ENCODE measurements at regions of chr14 and their contacts with region 1.

Region 1: GRCh38 chr14:64232095-64232838 is 61.9 kb downstream of the ESR2 start:
- DNase-seq: no peak
- H3K4me3 Mint-ChIP-seq: no peak overlapping the region
- H3K27ac Mint-ChIP-seq: peak overlapping the region; percentile 67
- H3K4me1 Mint-ChIP-seq: peaks cover 12% of the 10 kb centered on the region
- H3K27me3 Mint-ChIP-seq: peaks cover 2% of the 10 kb centered on the region

Region 2: DNA sequence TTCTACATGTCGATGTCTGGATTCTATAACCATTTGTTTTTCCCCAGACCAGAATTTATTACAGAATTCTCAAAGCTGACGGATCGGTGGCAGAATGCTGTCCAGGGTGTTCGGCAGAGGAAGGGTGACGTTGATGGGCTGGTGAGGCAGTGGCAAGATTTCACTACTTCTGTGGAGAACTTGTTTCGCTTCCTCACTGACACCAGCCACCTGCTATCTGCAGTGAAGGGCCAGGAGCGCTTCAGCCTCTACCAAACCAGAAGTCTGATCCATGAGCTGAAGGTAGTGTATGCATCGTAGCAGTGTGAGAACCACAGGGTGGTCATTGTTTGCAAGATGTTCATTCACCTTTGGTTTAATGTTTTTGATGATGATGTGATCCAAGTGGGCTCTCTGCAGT is 62.1 kb before region 1 on chr14:
- intact Hi-C with region 1: loop called (anchors 2 kb)
- DNase-seq: no peak
- H3K4me3 Mint-ChIP-seq: no peak overlapping the region
- H3K27ac Mint-ChIP-seq: no peak overlapping the region
- H3K4me1 Mint-ChIP-seq: peaks cover 4% of the 10 kb centered on the region
- H3K27me3 Mint-ChIP-seq: no peaks in the 10 kb centered on the region

Region 3: DNA sequence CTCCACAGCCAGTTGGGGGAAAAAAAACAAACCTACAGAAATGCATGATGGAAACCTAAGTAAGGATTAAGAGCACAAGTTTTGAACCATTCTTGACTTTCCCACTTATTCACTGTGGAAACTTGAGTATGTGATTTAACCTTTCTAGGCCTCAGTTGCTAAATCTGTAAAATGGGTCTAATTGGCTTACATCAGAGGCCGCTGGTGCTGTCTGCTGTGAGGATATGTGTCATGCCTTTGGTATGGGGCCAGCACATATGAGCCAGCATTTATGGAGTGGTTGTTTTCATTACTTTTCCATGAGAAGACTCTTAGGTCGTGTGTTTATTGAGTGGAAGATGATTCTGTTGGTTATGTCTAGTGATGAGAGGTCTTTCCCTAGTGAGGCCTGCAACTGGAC is 40.5 kb before region 1 on chr14:
- intact Hi-C with region 1: no loop called
- DNase-seq: no peak
- H3K4me3 Mint-ChIP-seq: no peak overlapping the region
- H3K27ac Mint-ChIP-seq: no peak overlapping the region
- H3K4me1 Mint-ChIP-seq: peaks cover 33% of the 10 kb centered on the region
- H3K27me3 Mint-ChIP-seq: no peaks in the 10 kb centered on the region

Region 4: DNA sequence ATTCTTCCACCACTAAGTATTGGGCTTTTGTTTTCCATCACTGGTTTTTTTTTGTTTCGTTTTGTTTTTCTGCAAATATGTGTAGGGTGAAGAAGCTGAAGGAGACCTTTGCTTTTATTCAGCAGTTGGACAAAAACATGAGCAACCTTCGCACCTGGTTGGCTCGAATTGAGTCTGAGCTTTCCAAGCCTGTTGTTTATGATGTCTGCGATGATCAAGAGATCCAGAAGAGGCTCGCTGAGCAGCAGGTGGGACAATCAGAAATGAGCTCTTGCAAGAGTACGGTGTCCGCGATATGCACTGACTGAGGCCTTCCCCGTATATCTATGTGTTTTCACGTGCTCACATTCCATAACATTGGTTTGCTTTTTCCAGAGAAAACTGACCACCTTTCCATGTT is 29.6 kb before region 1 on chr14:
- intact Hi-C with region 1: loop called (anchors 1 kb)
- DNase-seq: no peak
- H3K4me3 Mint-ChIP-seq: no peak overlapping the region
- H3K27ac Mint-ChIP-seq: no peak overlapping the region
- H3K4me1 Mint-ChIP-seq: peaks cover 12% of the 10 kb centered on the region
- H3K27me3 Mint-ChIP-seq: no peaks in the 10 kb centered on the region